ENCODE measurements at regions of chr1 and their contacts with region 1.

Region 1: GRCh38 chr1:17606826-17607440 is 67.4 kb downstream of the ARHGEF10L start:
- DNase-seq: peak; percentile 78
- ATAC-seq: peak; percentile 47
- H3K4me3 Mint-ChIP-seq: no peak overlapping the region
- H3K27ac Mint-ChIP-seq: no peak overlapping the region
- H3K4me1 Mint-ChIP-seq: no peaks in the 10 kb centered on the region
- H3K27me3 Mint-ChIP-seq: no peaks in the 10 kb centered on the region

Region 2: GRCh38 chr1:17314491-17315022 is 292.4 kb before region 1 on chr1:
- CTCF ChIA-PET with region 1: no interaction called
- POLR2A ChIA-PET with region 1: no interaction called
- intact Hi-C with region 1: no loop called
- DNase-seq: no peak
- ATAC-seq: no peak
- H3K4me3 Mint-ChIP-seq: no peak overlapping the region
- H3K27ac Mint-ChIP-seq: no peak overlapping the region
- H3K4me1 Mint-ChIP-seq: peaks cover 10% of the 10 kb centered on the region
- H3K27me3 Mint-ChIP-seq: peaks cover 9% of the 10 kb centered on the region

Region 3: GRCh38 chr1:17419626-17420328 is 187.2 kb before region 1 on chr1:
- CTCF ChIA-PET with region 1: interaction called, 3 read pairs
- POLR2A ChIA-PET with region 1: no interaction called
- intact Hi-C with region 1: loop called in 1 of 2 experiments (anchors 2 kb)
- DNase-seq: peak; percentile 80
- ATAC-seq: peak; percentile 88
- H3K4me3 Mint-ChIP-seq: no peak overlapping the region
- H3K27ac Mint-ChIP-seq: no peak overlapping the region
- H3K4me1 Mint-ChIP-seq: no peaks in the 10 kb centered on the region
- H3K27me3 Mint-ChIP-seq: no peaks in the 10 kb centered on the region

Region 4: DNA sequence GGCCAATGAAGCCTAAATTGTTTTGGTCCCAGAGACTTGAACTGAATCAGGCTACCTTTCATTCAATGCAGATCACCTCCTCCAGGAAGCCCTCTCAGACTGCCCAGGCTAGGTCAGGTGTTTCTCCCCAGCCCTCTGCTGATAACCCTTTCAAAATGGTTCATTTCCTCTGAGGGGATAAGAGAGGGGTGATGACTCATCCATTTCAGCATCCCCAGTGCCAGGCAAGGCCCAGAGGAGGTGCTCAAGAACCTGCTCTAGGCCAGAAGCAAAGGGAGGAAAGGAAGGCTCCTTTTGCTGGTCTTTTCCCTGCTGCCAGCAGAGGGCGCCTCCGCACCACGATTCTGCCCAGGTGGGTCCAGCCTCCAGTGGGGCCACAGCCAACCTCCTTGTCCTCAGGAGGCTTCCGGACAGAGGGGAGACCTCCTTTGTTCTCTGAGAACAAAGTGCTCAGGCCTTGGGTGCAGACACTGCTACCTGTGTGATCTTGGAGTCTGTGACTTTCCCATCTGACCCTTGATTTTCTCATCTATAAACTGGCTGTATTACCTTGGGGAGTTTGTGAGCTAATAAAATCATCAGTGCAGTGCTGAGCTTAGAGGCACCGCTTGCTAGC is 112.7 kb before region 1 on chr1:
- CTCF ChIA-PET with region 1: interaction called, 9 read pairs
- POLR2A ChIA-PET with region 1: no interaction called
- intact Hi-C with region 1: loop called in 1 of 2 experiments (anchors 2 kb)
- DNase-seq: peak; percentile 84
- ATAC-seq: peak; percentile 100
- H3K4me3 Mint-ChIP-seq: no peak overlapping the region
- H3K27ac Mint-ChIP-seq: no peak overlapping the region
- H3K4me1 Mint-ChIP-seq: no peaks in the 10 kb centered on the region
- H3K27me3 Mint-ChIP-seq: peaks cover 4% of the 10 kb centered on the region

Region 5: GRCh38 chr1:17502326-17502778 is 104.6 kb before region 1 on chr1:
- CTCF ChIA-PET with region 1: interaction called, 22 read pairs
- POLR2A ChIA-PET with region 1: no interaction called
- intact Hi-C with region 1: loop called (anchors 1 kb)
- DNase-seq: peak; percentile 82
- ATAC-seq: peak; percentile 80
- H3K4me3 Mint-ChIP-seq: no peak overlapping the region
- H3K27ac Mint-ChIP-seq: no peak overlapping the region
- H3K4me1 Mint-ChIP-seq: no peaks in the 10 kb centered on the region
- H3K27me3 Mint-ChIP-seq: peaks cover 15% of the 10 kb centered on the region

Measured in activated CD4-positive, alpha-beta T cell treated with anti-CD3 and anti-CD28 coated beads for 36 hours (primary cell).